ENCODE measurements at regions of chr14 and their contacts with region 1.

Region 1: DNA sequence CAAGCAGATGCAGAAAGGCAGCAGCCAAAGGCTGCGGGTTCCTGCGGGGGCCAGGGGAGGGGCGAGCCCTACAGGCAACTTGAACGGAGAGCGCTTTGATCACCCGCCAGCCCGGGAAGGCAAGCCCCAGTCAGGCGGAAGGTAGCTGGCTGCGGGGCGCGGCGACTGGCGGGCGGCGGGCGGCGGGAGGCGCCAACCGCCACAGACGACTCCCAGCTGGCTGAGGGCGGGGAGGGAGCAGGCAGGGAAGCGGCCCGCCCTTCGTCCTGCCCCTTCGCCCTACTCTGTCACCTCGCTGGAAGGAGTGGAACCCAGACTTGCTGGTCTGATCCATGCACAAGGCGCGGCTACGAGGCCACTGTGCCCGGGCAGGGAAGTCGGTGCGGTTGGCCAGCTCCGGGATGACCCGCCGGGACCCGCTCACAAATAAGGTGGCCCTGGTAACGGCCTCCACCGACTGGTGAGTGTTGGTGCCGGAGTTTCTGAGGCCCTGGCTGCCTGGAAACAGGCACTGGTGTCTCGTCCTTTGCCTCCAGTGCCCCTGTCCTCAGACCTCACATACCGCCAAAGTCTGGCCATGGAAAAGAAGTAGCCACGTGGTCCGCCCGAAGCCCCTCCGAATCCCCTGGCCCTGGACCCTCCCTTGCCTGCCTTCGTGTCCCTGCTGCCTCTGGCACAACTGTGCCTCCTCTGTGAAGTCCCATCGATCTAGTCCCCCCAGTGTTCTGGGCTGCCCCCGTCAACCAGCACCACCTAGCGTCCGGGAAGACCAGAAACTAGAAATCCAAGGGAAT is 15.4 kb upstream of the CARMIL3 start:
- DNase-seq: peak in 9 of 10 donors; percentile 59 to 86 (median 70)
- H3K4me3 ChIP-seq: peak overlapping the region; percentile 52 to 83 (median 70)
- H3K27ac ChIP-seq: peak overlapping the region in 58 of 59 donors; percentile 56 to 95 (median 87)
- H3K27me3 ChIP-seq: no peaks in the 10 kb centered on the region
- CTCF ChIP-seq: peak; percentile 52 to 81 (median 72)

Region 2: DNA sequence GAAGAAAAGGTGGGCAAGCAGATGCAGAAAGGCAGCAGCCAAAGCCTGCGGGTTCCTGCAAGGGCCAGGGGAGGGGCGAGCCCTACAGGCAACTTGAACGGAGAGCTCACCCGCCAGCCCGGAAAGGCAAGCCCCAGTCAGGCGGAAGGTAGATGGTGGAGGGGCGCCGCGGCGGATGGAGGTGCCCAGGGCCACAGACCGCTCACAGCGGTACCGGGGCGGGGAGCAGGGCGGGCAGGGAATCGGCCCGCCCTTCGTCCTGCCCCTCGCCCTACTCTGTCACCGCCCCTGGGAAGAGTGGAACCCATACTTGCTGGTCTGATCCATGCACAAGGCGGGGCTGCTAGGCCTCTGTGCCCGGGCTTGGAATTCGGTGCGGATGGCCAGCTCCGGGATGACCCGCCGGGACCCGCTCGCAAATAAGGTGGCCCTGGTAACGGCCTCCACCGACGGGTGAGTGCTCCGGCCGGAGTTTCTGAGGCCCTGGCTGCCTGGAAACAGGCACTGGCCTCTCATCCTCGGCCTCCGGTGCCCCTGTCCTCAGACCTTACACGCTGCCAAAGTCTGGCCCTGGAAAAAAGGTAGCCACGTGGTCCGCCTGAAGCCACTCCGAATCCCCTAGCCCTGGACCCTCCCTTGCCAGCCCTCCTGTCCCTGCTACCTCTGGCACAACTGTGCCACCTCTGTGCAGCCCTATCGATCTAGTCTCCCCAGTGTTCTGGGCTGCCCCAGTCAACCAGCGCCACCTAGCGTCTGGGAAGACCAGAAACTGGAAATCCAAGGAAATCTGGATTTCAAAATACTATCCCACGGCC is 82.7 kb before region 1 on chr14 and contains the start of gene DHRS4:
- intact Hi-C with region 1: no loop called
- DNase-seq: peak; percentile 55 to 89 (median 78)
- H3K4me3 ChIP-seq: peak within 1 kb of the TSS; percentile 37 to 98 (median 85)
- H3K27ac ChIP-seq: peak within 1 kb of the TSS in 58 of 59 donors; percentile 21 to 96 (median 89)
- H3K27me3 ChIP-seq: no peaks in the 10 kb centered on the region
- CTCF ChIP-seq: peak; percentile 42 to 93 (median 86)
- total RNA-seq, gene DHRS4: 6.3 to 22.2 (median 12.8) TPM

Region 3: GRCh38 chr14:23984891-23985602 is 51.3 kb before region 1 on chr14:
- intact Hi-C with region 1: loop called in 1 of 2 experiments (anchors 5 kb)
- DNase-seq: no peak
- H3K4me3 ChIP-seq: no peak overlapping the region
- H3K27ac ChIP-seq: no peak overlapping the region
- H3K27me3 ChIP-seq: no peaks in the 10 kb centered on the region
- CTCF ChIP-seq: no peak

Measured in dorsolateral prefrontal cortex (tissue), 120 donors.